ENCODE measurements at regions of chr19 and their contacts with region 1.

Region 1: GRCh38 chr19:49327878-49328544 is 3.0 kb upstream of the SLC6A16 start:
- DNase-seq: peak; percentile 48 to 74 (median 71)
- H3K4me3 ChIP-seq: no peak overlapping the region
- H3K27ac ChIP-seq: no peak overlapping the region
- H3K4me1 ChIP-seq: peaks cover 2 to 13% (median 7%) of the 10 kb centered on the region in 4 experiments
- H3K27me3 ChIP-seq: no peaks in the 10 kb centered on the region

Region 2: GRCh38 chr19:49301165-49301865 is 26.7 kb before region 1 on chr19:
- CTCF ChIA-PET with region 1: interaction called, 11 read pairs
- POLR2A ChIA-PET with region 1: no interaction called
- DNase-seq: peak; percentile 77 to 86 (median 80)
- H3K4me3 ChIP-seq: peak overlapping the region in 3 of 7 experiments; percentile 36 to 73 (median 43)
- H3K27ac ChIP-seq: no peak overlapping the region
- H3K4me1 ChIP-seq: peaks cover 0 to 4% (median 0%) of the 10 kb centered on the region in 4 experiments
- H3K27me3 ChIP-seq: no peaks in the 10 kb centered on the region

Measured in common myeloid progenitor, CD34-positive (primary cell).